Activated naive CD4-positive, alpha-beta T cell treated with anti-CD3 and anti-CD28 coated beads for 36 hours (primary cell): ENCODE measurements at regions of chr6 and their contacts with region 1.

Region 1: DNA sequence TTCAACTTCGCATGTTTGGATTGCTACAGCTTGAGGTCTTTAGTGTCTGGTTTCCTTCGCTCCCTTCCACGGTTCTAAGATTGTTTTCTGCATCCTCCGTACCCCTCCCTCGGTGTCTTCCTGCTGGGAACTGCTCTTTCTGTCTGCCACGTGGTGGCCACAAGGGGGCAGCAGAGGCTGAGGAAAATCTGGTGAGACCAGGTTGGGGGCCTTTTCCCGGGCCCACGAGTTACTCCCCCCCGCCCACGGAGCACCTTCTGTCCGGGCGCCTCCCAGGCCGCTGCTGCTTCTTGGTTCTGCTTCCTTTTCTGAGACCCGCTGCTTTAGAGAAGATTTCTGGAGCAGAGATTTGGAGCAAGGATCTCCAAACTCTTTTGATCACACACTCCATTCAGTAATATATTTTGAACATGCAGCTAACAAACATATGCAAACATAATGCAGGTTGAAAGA is 21.1 kb upstream of the NOTCH4 start:
- DNase-seq: peak; percentile 76
- H3K4me3 Mint-ChIP-seq: peak overlapping the region; percentile 34
- H3K27ac Mint-ChIP-seq: no peak overlapping the region
- H3K4me1 Mint-ChIP-seq: peaks cover 28% of the 10 kb centered on the region
- H3K27me3 Mint-ChIP-seq: no peaks in the 10 kb centered on the region

Region 2: GRCh38 chr6:31680840-31681671 is 563.9 kb before region 1 on chr6 and contains the start of gene LY6G5C:
- CTCF ChIA-PET with region 1: no interaction called
- intact Hi-C with region 1: no loop called
- DNase-seq: peak; percentile 85
- H3K4me3 Mint-ChIP-seq: peak within 1 kb of the TSS; percentile 74
- H3K27ac Mint-ChIP-seq: no peak within 1 kb of the TSS
- H3K4me1 Mint-ChIP-seq: peaks cover 11% of the 10 kb centered on the region
- H3K27me3 Mint-ChIP-seq: no peaks in the 10 kb centered on the region
- total RNA-seq, gene LY6G5C: 0.93 to 1.4 TPM

Region 3: DNA sequence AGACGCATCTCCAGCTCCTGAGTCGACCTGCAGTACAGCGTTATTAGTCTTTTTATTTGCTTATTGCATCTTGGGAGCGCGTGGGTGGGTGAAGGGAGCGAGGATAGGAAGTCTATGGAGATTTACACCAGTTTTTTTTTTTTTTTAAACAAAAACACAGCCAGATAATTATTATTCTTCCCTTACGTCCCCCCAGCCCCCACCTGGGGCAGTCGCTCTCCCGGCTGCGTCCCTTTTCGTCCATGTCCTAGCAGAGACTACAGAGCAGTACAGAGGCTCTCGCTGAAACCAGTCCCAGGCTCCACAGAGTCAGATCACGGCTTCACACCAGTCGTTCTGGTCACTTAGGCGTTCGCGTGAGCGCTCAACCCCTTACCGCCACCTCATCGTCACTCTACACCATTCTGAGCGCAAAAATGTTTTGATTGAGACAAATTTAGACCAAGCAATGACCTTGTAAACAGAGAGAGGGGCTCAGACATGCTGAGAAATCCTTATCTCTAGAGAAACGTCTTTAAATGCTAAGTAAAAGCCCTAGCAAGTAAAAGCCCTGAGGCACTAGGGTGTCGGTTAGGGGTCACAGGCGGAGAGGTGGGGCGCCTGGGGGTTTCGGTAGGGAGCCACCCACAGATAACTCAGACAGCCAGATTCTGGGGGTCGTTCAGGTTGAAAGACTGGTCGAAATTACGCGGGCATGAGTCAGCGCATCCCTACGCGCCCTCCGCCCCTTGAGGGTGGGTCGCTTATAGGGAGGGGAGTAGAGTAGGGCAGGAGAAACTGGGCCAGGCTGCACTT is 92.0 kb before region 1 on chr6:
- CTCF ChIA-PET with region 1: no interaction called
- intact Hi-C with region 1: no loop called
- DNase-seq: no peak
- H3K4me3 Mint-ChIP-seq: peak overlapping the region; percentile 99
- H3K27ac Mint-ChIP-seq: no peak overlapping the region
- H3K4me1 Mint-ChIP-seq: peaks cover 55% of the 10 kb centered on the region
- H3K27me3 Mint-ChIP-seq: peaks cover 8% of the 10 kb centered on the region

Region 4: DNA sequence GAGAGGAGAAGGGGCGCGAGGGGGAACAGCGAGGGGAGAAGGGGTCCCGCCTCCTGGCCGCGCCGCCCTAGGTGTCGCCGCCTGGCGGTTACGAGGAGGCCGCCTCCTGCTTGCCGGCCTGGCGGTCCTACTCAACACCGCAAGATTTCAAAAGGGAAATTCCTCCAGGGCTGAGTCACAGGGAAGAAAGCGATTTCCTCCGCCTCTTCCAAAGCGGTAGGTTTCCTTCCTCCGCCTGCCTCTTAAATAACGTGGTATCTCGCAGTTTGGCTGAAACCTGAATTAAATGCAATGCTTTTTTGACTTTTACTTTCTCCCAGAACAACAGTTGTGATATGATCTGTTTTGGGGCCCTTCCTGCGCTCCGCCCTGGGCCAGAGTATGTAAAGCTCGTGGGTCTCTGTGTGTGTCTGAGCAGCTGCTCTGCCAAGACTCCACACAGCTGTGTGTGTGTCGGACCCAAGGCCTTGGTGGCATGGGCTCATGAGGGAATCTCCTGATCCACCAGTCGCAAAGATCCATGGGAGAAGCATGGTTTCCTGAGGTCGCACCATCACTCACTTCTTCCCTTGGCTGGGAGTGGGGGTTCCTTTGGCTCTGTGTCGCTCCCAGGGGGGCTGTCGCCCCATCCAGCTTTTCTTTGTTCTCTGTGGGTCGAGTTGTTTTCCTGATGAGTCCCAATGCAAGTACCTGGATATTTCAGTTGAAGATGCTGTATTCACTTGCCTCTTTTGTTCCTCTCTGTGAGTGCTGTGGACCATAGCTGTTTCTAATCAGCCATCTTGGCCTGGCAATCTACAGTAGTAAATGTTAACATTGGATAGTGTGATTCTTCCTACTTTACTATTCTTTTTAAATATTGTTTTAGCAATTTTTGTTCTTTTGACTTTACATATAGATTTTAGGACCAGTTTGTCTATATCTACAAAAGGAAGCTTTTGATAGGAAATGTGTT is 10.5 kb after region 1 on chr6:
- CTCF ChIA-PET with region 1: interaction called, 24 read pairs
- intact Hi-C with region 1: no loop called
- DNase-seq: peak; percentile 83
- H3K4me3 Mint-ChIP-seq: peak overlapping the region; percentile 34
- H3K27ac Mint-ChIP-seq: peak overlapping the region; percentile 31
- H3K4me1 Mint-ChIP-seq: peaks cover 26% of the 10 kb centered on the region
- H3K27me3 Mint-ChIP-seq: no peaks in the 10 kb centered on the region

Region 5: DNA sequence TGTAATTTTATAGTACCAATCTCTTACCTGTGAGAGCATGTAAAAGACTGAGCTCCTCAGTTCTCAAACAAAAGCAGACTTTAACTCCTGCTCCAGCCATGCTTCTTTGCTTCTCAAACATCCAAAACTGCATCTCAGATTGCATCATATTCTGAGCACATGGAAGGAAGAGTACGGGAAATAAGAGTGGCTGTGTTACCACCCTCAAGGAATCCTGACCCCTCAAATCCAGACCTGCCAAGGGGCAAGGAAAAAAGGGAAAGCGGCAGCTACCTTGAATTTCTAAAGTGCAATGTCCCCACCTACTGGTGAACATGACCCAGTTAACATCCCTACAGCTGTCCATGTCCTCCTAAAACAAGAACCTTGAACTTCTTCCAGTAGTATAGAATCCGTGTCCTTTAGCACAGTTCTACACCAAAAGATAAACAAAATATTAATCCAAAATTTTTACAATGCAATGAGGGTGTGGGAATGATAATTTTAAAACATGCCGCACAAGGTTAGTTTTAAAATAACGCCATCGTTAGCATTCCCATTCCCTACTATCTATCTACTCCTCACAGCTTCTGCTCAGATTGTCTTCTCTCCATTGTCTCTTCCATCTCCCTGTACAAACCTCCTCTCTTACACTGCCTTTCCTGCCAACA is 455.5 kb after region 1 on chr6:
- CTCF ChIA-PET with region 1: interaction called, 4 read pairs
- intact Hi-C with region 1: loop called (anchors 5 kb)
- DNase-seq: peak; percentile 30
- H3K4me3 Mint-ChIP-seq: no peak overlapping the region
- H3K27ac Mint-ChIP-seq: no peak overlapping the region
- H3K4me1 Mint-ChIP-seq: peaks cover 2% of the 10 kb centered on the region
- H3K27me3 Mint-ChIP-seq: peaks cover 24% of the 10 kb centered on the region

Region 6: GRCh38 chr6:32796848-32797776 is 552.1 kb after region 1 on chr6:
- CTCF ChIA-PET with region 1: interaction called, 4 read pairs
- intact Hi-C with region 1: loop called (anchors 10 kb)
- DNase-seq: peak; percentile 91
- H3K4me3 Mint-ChIP-seq: peak overlapping the region; percentile 47
- H3K27ac Mint-ChIP-seq: no peak overlapping the region
- H3K4me1 Mint-ChIP-seq: peaks cover 22% of the 10 kb centered on the region
- H3K27me3 Mint-ChIP-seq: peaks cover 20% of the 10 kb centered on the region